ENCODE measurements at regions of chr10 and their contacts with region 1.

Region 1: GRCh38 chr10:100728928-100729861 is 16.2 kb upstream of the PAX2 start:
- DNase-seq: peak in 2 of 9 experiments; percentile 42 to 51
- ATAC-seq: no peak
- H3K4me3 ChIP-seq: no peak overlapping the region
- H3K4me3 Mint-ChIP-seq: peak overlapping the region; percentile 57
- H3K27ac ChIP-seq: no peak overlapping the region
- H3K27ac Mint-ChIP-seq: no peak overlapping the region
- H3K4me1 ChIP-seq: peaks cover 24% of the 10 kb centered on the region
- H3K4me1 Mint-ChIP-seq: peaks cover 25% of the 10 kb centered on the region
- H3K27me3 ChIP-seq: peaks cover 18 to 33% of the 10 kb centered on the region in 2 experiments
- H3K27me3 Mint-ChIP-seq: peaks cover 73% of the 10 kb centered on the region
- CTCF ChIP-seq: no peak

Region 2: DNA sequence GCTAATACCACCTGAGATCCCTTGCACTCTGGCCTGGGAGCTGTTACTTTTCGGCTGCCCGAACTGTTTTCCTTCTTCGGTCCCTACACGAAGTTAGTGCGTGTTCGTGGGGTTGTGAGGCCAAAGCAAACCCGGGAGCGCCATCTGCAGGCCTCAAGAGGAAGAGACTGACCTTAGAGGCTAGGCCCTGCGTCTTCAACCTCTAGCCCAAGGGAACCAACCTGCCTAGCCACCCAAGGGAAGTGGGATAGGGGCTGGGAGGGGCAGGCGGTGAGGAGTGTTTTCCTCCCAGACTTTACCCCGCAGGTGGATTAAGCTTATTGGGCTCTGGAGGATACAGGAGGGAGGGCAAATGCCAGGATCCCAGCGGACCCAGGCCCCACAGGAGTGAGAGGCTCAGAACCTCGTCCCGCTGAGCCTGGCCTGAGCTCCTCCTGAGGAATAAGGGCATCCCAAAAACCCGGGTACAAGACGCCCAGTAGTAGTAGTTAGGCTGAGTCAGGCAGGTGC is 14.5 kb after region 1 on chr10:
- CTCF ChIA-PET with region 1: interaction called, 10 read pairs
- POLR2A ChIA-PET with region 1: interaction called, 3 read pairs
- intact Hi-C with region 1: no loop called
- DNase-seq: peak in 8 of 9 experiments; percentile 10 to 80 (median 40)
- ATAC-seq: peak; percentile 79
- H3K4me3 ChIP-seq: no peak overlapping the region
- H3K4me3 Mint-ChIP-seq: peak overlapping the region; percentile 22
- H3K27ac ChIP-seq: no peak overlapping the region
- H3K27ac Mint-ChIP-seq: no peak overlapping the region
- H3K4me1 ChIP-seq: peaks cover 43% of the 10 kb centered on the region
- H3K4me1 Mint-ChIP-seq: peaks cover 37% of the 10 kb centered on the region
- H3K27me3 ChIP-seq: peaks cover 45 to 67% of the 10 kb centered on the region in 2 experiments
- H3K27me3 Mint-ChIP-seq: peaks cover 69% of the 10 kb centered on the region
- CTCF ChIP-seq: peak; percentile 42

Region 3: DNA sequence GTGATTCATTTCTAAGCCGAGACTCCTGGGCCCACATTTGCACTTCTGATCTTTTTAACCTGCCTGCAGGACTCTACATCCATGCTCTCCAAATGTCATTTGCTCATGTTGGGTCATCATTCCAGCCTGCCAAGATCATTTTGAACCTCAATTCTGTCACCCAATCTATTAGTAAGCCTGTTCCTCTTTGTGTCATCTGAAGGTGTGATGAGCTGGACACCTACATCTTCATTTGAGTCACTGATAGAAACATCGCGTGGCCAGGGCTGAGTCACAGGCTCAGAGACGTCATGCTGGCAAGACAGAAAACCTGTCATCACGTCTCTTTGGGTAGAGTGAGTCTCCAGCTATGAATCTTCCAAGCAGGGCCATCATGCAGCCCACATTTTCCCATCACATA is 118.2 kb after region 1 on chr10:
- CTCF ChIA-PET with region 1: no interaction called
- POLR2A ChIA-PET with region 1: no interaction called
- intact Hi-C with region 1: no loop called
- DNase-seq: no peak
- ATAC-seq: no peak
- H3K4me3 ChIP-seq: no peak overlapping the region
- H3K4me3 Mint-ChIP-seq: no peak overlapping the region
- H3K27ac ChIP-seq: no peak overlapping the region
- H3K27ac Mint-ChIP-seq: no peak overlapping the region
- H3K4me1 ChIP-seq: no peaks in the 10 kb centered on the region
- H3K4me1 Mint-ChIP-seq: no peaks in the 10 kb centered on the region
- H3K27me3 ChIP-seq: peaks cover 0 to 2% of the 10 kb centered on the region in 2 experiments
- H3K27me3 Mint-ChIP-seq: peaks cover 48% of the 10 kb centered on the region
- CTCF ChIP-seq: no peak

Region 4: DNA sequence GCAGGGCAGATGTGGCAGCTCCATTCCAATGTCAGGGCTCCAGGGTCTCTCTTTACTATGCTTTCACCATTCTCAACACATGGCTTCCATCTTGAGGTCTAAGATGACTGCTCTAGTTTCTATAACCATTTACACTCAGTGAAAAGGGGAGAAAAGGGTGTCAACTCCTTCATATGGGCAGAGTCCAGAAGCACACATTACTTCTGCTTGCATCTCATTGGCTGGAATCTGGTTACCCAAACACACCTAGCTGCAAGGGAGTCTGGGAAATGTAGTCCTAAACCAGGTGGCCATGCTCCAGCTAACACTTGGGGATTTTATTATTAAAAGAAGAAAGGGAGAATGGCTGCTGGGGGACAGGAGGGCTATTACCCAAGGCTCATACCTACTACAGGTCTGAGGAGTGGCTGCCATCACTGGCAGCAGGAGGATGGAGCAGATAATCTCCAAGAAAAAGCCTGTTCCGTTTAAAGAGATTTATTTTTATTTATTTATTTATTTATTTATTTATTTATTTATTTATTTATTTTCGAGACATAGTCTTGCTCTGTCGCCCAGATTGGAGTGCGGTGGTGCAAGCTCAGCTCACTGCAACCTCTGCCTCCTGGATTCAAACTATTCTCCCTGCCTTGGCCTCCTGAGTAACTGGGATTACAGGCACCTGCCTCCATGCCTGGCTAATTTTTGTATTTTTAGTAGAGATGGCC is 529.1 kb after region 1 on chr10:
- CTCF ChIA-PET with region 1: no interaction called
- POLR2A ChIA-PET with region 1: no interaction called
- intact Hi-C with region 1: no loop called
- DNase-seq: no peak
- ATAC-seq: no peak
- H3K4me3 ChIP-seq: no peak overlapping the region
- H3K4me3 Mint-ChIP-seq: no peak overlapping the region
- H3K27ac ChIP-seq: no peak overlapping the region
- H3K27ac Mint-ChIP-seq: no peak overlapping the region
- H3K4me1 ChIP-seq: no peaks in the 10 kb centered on the region
- H3K4me1 Mint-ChIP-seq: no peaks in the 10 kb centered on the region
- H3K27me3 ChIP-seq: peaks cover 3 to 4% of the 10 kb centered on the region in 2 experiments
- H3K27me3 Mint-ChIP-seq: peaks cover 49% of the 10 kb centered on the region
- CTCF ChIP-seq: no peak

Measured in CD8-positive, alpha-beta T cell (primary cell).